MCF 10A (cell line): ENCODE measurements at regions of chr7 and their contacts with region 1.

Region 1: GRCh38 chr7:133230591-133231194 is 22.2 kb upstream of the EXOC4 start:
- DNase-seq: peak; percentile 69
- H3K4me3 Mint-ChIP-seq: no peak overlapping the region
- H3K27ac Mint-ChIP-seq: no peak overlapping the region
- H3K4me1 Mint-ChIP-seq: no peaks in the 10 kb centered on the region
- H3K27me3 Mint-ChIP-seq: peaks cover 34% of the 10 kb centered on the region
- CTCF ChIP-seq: peak; percentile 63

Region 2: DNA sequence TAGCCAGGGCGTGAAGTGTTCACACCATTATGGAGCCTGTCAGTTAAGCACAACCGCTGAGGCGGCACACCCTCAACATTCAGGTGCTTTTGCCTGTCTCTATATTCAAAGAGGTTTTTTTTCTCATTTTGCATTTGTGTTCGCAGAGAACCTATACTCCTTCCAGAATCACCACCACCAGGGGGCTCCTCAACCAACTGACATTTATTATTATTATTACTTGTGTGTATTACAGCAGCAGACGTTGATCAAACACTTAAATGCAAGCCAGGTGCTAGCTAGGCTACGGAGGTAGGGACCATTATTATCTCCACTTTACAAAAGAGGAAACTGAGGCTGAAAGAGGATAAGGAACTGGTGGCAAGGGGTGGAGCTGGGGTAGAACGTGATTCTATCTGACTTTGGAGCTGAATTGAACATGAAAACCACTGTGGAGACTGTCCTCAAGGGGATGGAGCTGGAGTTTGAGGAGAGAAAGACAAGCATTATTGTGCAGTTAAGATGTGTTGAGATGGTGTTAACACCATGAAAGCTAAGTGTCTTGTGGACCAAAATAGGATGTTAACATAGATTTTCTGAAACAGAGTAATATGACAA is 520.6 kb before region 1 on chr7:
- CTCF ChIA-PET with region 1: no interaction called
- POLR2A ChIA-PET with region 1: no interaction called
- intact Hi-C with region 1: loop called (anchors 1 kb)
- DNase-seq: peak; percentile 48
- H3K4me3 Mint-ChIP-seq: no peak overlapping the region
- H3K27ac Mint-ChIP-seq: no peak overlapping the region
- H3K4me1 Mint-ChIP-seq: peaks cover 3% of the 10 kb centered on the region
- H3K27me3 Mint-ChIP-seq: peaks cover 12% of the 10 kb centered on the region
- CTCF ChIP-seq: peak; percentile 50

Region 3: GRCh38 chr7:132930881-132931280 is 299.8 kb before region 1 on chr7:
- CTCF ChIA-PET with region 1: no interaction called
- POLR2A ChIA-PET with region 1: no interaction called
- intact Hi-C with region 1: loop called (anchors 10 kb)
- DNase-seq: peak; percentile 7
- H3K4me3 Mint-ChIP-seq: no peak overlapping the region
- H3K27ac Mint-ChIP-seq: no peak overlapping the region
- H3K4me1 Mint-ChIP-seq: peaks cover 8% of the 10 kb centered on the region
- H3K27me3 Mint-ChIP-seq: no peaks in the 10 kb centered on the region
- CTCF ChIP-seq: no peak

Region 4: GRCh38 chr7:133394369-133394768 is 163.7 kb after region 1 on chr7:
- CTCF ChIA-PET with region 1: no interaction called
- POLR2A ChIA-PET with region 1: no interaction called
- intact Hi-C with region 1: no loop called
- DNase-seq: no peak
- H3K4me3 Mint-ChIP-seq: no peak overlapping the region
- H3K27ac Mint-ChIP-seq: no peak overlapping the region
- H3K4me1 Mint-ChIP-seq: no peaks in the 10 kb centered on the region
- H3K27me3 Mint-ChIP-seq: no peaks in the 10 kb centered on the region
- CTCF ChIP-seq: no peak

Region 5: DNA sequence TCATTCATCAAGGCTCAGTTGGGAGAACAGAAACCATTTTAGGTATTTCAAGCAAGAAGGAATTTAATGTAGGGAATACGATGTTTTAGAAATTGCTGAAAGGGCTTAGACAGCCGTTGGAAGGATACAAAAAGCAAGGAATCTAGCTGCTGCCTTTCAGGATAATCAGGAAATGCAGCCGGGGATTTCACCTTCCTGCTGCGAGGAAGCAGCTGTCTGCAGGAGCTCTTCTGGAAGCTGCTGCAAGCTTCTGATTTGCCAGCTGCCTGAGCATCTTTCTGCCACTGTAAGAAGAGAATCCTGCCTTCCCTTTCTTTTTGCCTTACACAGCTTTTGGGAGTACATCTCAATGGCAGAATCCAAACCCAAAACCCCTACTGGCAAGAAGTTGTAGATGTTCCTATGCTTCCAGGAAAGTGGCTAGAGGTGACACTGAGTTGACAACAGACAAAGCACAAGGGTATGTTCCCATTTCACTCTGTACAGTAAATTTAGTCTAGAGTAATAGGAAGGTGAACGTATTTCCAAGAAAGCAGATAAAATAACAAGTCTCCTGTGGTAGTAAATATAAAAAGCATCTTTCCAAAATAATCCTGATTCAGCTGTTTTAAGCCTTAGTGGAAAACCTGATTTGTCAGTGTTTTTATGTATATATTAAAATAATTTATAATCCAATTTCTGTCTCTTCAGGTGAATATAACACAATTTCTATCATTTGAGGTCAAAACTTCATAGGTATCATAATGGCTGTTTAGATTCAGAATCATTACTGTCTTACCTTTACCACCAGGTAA is 748.0 kb after region 1 on chr7:
- CTCF ChIA-PET with region 1: no interaction called
- POLR2A ChIA-PET with region 1: no interaction called
- intact Hi-C with region 1: loop called (anchors 10 kb)
- DNase-seq: no peak
- H3K4me3 Mint-ChIP-seq: no peak overlapping the region
- H3K27ac Mint-ChIP-seq: no peak overlapping the region
- H3K4me1 Mint-ChIP-seq: no peaks in the 10 kb centered on the region
- H3K27me3 Mint-ChIP-seq: no peaks in the 10 kb centered on the region
- CTCF ChIP-seq: no peak

Region 6: GRCh38 chr7:134016223-134016941 is 785.7 kb after region 1 on chr7:
- CTCF ChIA-PET with region 1: no interaction called
- POLR2A ChIA-PET with region 1: no interaction called
- intact Hi-C with region 1: loop called (anchors 5 kb)
- DNase-seq: peak; percentile 33
- H3K4me3 Mint-ChIP-seq: no peak overlapping the region
- H3K27ac Mint-ChIP-seq: no peak overlapping the region
- H3K4me1 Mint-ChIP-seq: no peaks in the 10 kb centered on the region
- H3K27me3 Mint-ChIP-seq: no peaks in the 10 kb centered on the region
- CTCF ChIP-seq: peak; percentile 59